Activated T-helper 2 cell treated with anti-CD3 and anti-CD28 coated beads, Interferon-gamma antibody, Interleukin-2, Interleukin-4, amounts not matched to agents 10 μg/mL and 5 μg/mL and 100 μg/mL, durations not matched to agents 14 hours and 24 hours and 36 hours (primary cell): ENCODE measurements at regions of chr18 and their contacts with region 1.

Region 1: GRCh38 chr18:34787931-34788532 is 77.9 kb downstream of the DTNA start:
- DNase-seq: no peak
- H3K4me3 Mint-ChIP-seq: no peak overlapping the region
- H3K27ac Mint-ChIP-seq: no peak overlapping the region
- H3K4me1 Mint-ChIP-seq: peaks cover 3% of the 10 kb centered on the region
- H3K27me3 Mint-ChIP-seq: peaks cover 9% of the 10 kb centered on the region

Region 2: GRCh38 chr18:34661464-34662111 is 126.4 kb before region 1 on chr18:
- intact Hi-C with region 1: loop called (anchors 1 kb)
- DNase-seq: no peak
- H3K4me3 Mint-ChIP-seq: no peak overlapping the region
- H3K27ac Mint-ChIP-seq: no peak overlapping the region
- H3K4me1 Mint-ChIP-seq: no peaks in the 10 kb centered on the region
- H3K27me3 Mint-ChIP-seq: peaks cover 9% of the 10 kb centered on the region

Region 3: DNA sequence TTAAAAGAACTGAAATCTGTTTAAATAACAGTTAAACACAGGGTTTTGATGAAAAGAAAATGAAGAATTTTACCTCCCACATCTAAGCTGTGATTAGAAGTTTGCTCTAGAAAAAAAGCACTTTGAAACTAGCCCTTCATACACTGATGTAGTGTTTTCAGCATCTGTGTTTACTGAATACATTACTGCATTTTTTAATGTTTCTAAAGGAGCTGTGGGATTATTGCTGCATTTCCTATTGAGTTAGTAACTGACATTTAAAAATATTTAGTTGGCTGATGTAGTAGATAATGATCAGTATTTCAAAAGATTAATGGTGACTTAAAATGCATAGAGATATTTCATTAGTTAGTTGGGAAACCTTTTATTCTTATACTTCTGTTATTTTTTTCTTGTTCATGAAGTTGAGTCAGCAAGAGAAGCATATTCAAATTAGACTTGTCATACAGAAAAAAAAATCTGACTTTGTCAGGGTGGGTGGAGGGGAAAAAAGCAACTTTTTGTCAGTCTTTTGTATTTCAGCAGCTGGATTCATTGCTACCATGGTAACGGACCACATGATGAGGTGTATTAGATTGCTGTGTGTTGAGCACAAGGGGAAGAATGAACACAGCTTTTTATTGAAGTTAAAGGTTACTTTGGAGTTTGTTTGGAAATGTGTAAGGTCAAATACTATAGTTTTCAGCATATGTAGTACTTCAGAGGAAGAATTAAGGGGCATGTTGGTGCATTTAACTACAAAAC is 78.2 kb before region 1 on chr18 and contains the start of gene DTNA:
- intact Hi-C with region 1: no loop called
- DNase-seq: no peak
- H3K4me3 Mint-ChIP-seq: no peak within 1 kb of the TSS
- H3K27ac Mint-ChIP-seq: no peak within 1 kb of the TSS
- H3K4me1 Mint-ChIP-seq: no peaks in the 10 kb centered on the region
- H3K27me3 Mint-ChIP-seq: no peaks in the 10 kb centered on the region
- total RNA-seq, gene DTNA: 0.73 TPM in 1 of 2 replicates, not detected in the other

Region 4: GRCh38 chr18:35939138-35939537 is 1151.1 kb after region 1 on chr18:
- intact Hi-C with region 1: no loop called
- DNase-seq: no peak
- H3K4me3 Mint-ChIP-seq: no peak overlapping the region
- H3K27ac Mint-ChIP-seq: no peak overlapping the region
- H3K4me1 Mint-ChIP-seq: no peaks in the 10 kb centered on the region
- H3K27me3 Mint-ChIP-seq: peaks cover 8% of the 10 kb centered on the region